ENCODE measurements at regions of chr2 and their contacts with region 1.

Region 1: GRCh38 chr2:222318026-222318711 is 19.4 kb upstream of the PAX3 start:
- DNase-seq: peak; percentile 54
- ATAC-seq: peak; percentile 68 to 91

Region 2: GRCh38 chr2:222561817-222562645 is 243.9 kb after region 1 on chr2:
- intact Hi-C with region 1: loop called (anchors 2 to 5 kb)
- DNase-seq: no peak
- ATAC-seq: peak; percentile 77 to 84

Region 3: DNA sequence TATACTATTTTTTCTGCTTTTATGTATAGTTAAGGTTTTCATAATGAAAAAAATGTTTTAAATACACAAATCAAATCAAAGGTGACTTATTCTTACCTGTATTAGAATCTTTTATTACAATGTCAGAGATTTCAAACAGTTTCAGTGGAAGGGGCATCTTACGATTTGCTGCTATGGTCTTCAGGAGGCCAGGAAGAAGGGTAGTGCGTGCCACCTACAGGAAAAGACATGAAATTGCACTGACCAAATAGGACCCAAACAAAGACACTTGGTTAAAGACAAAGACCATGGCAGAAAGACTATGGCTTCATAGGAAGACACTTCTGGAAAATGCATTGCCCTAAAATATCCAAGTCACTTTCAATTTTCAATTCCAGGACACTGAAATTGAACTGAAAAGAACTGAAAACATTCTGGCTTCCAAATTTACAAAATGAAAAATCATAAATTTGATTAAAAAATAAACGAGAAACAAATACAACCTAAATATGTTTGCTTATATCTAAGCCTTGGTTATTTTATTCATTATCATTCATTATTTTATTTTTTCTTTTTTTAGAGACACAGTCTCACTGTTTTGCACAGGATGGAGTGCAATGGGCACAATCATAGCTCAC is 295.7 kb after region 1 on chr2:
- intact Hi-C with region 1: loop called (anchors 2 to 5 kb)
- DNase-seq: no peak
- ATAC-seq: peak; percentile 56 to 57